ENCODE measurements at regions of chr13 and their contacts with region 1.

Region 1: GRCh38 chr13:39051157-39051556 is 12.9 kb downstream of the NHLRC3 start:
- DNase-seq: no peak
- H3K4me3 ChIP-seq: no peak overlapping the region
- H3K27ac ChIP-seq: no peak overlapping the region
- H3K4me1 ChIP-seq: no peaks in the 10 kb centered on the region
- H3K27me3 ChIP-seq: no peaks in the 10 kb centered on the region
- CTCF ChIP-seq: peak; percentile 70

Region 2: GRCh38 chr13:39263033-39263432 is 211.9 kb after region 1 on chr13:
- intact Hi-C with region 1: no loop called
- DNase-seq: no peak
- H3K4me3 ChIP-seq: no peak overlapping the region
- H3K27ac ChIP-seq: peak overlapping the region; percentile 79
- H3K4me1 ChIP-seq: peaks cover 56% of the 10 kb centered on the region
- H3K27me3 ChIP-seq: no peaks in the 10 kb centered on the region
- CTCF ChIP-seq: peak; percentile 84

Region 3: GRCh38 chr13:39676315-39676876 is 625.2 kb after region 1 on chr13:
- intact Hi-C with region 1: loop called (anchors 5 kb)
- DNase-seq: no peak
- H3K4me3 ChIP-seq: no peak overlapping the region
- H3K27ac ChIP-seq: no peak overlapping the region
- H3K4me1 ChIP-seq: no peaks in the 10 kb centered on the region
- H3K27me3 ChIP-seq: no peaks in the 10 kb centered on the region
- CTCF ChIP-seq: peak; percentile 66

Measured in left ventricle myocardium inferior (tissue), 1 donor.